ENCODE measurements at regions of chr1 and their contacts with region 1.

Region 1: DNA sequence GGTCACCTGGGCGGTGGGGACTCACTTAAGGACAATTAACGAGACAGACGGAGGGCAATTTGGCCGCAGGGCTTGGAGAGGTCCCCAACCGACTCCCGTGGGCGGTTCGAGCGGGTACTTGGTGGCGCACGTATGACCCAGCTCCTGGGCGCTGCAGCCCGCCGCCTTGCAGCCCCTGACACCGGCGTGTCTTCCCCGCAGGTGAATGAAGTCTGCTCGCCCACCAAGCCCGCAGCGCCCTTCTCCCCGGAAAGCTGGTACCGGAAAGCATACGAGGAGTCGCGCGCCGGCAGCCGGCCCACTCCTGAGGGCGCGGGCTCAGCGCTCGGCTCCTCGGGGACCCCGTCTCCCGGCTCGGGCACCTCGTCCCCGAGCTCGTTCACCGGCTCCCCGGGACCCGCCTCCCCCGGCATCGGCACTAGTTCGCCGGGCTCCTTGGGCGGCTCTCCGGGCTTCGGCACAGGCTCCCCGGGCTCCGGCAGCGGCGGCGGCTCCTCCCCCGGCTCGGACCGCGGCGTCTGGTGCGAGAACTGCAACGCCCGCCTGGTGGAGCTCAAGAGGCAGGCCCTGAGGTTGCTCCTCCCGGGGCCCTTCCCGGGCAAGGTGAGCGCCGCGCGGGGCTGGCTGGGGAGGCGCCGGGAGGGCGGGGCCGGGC is 1.4 kb downstream of the KIF26B start:
- DNase-seq: peak; percentile 28 to 83 (median 58)
- ATAC-seq: peak; percentile 93
- H3K4me3 ChIP-seq: peak overlapping the region; percentile 52
- H3K4me3 Mint-ChIP-seq: peak overlapping the region; percentile 76 to 88 (median 83)
- H3K27ac ChIP-seq: no peak overlapping the region
- H3K27ac Mint-ChIP-seq: peak overlapping the region in 1 of 9 donors; percentile 29
- H3K4me1 ChIP-seq: peaks cover 15 to 20% of the 10 kb centered on the region in 2 donors
- H3K4me1 Mint-ChIP-seq: peaks cover 0 to 28% (median 26%) of the 10 kb centered on the region in 7 donors
- H3K27me3 ChIP-seq: peaks cover 3 to 13% of the 10 kb centered on the region in 2 donors
- H3K27me3 Mint-ChIP-seq: peaks cover 53 to 71% (median 67%) of the 10 kb centered on the region in 5 donors

Region 2: GRCh38 chr1:245197911-245198379 is 41.7 kb after region 1 on chr1:
- CTCF ChIA-PET with region 1: no interaction called
- POLR2A ChIA-PET with region 1: no interaction called
- intact Hi-C with region 1: no loop called
- DNase-seq: no peak
- ATAC-seq: no peak
- H3K4me3 ChIP-seq: no peak overlapping the region
- H3K4me3 Mint-ChIP-seq: no peak overlapping the region
- H3K27ac ChIP-seq: no peak overlapping the region
- H3K27ac Mint-ChIP-seq: no peak overlapping the region
- H3K4me1 ChIP-seq: no peaks in the 10 kb centered on the region
- H3K4me1 Mint-ChIP-seq: peaks cover 0 to 4% (median 0%) of the 10 kb centered on the region in 7 donors
- H3K27me3 ChIP-seq: no peaks in the 10 kb centered on the region
- H3K27me3 Mint-ChIP-seq: peaks cover 3 to 31% (median 30%) of the 10 kb centered on the region in 5 donors

Region 3: GRCh38 chr1:245225322-245226202 is 69.4 kb after region 1 on chr1:
- CTCF ChIA-PET with region 1: no interaction called
- POLR2A ChIA-PET with region 1: no interaction called
- intact Hi-C with region 1: no loop called
- DNase-seq: no peak
- ATAC-seq: no peak
- H3K4me3 ChIP-seq: no peak overlapping the region
- H3K4me3 Mint-ChIP-seq: no peak overlapping the region
- H3K27ac ChIP-seq: no peak overlapping the region
- H3K27ac Mint-ChIP-seq: no peak overlapping the region
- H3K4me1 ChIP-seq: no peaks in the 10 kb centered on the region
- H3K4me1 Mint-ChIP-seq: no peaks in the 10 kb centered on the region
- H3K27me3 ChIP-seq: no peaks in the 10 kb centered on the region
- H3K27me3 Mint-ChIP-seq: peaks cover 0 to 6% (median 0%) of the 10 kb centered on the region in 5 donors

Region 4: GRCh38 chr1:245549996-245550719 is 393.9 kb after region 1 on chr1:
- CTCF ChIA-PET with region 1: no interaction called
- POLR2A ChIA-PET with region 1: no interaction called
- intact Hi-C with region 1: no loop called
- DNase-seq: no peak
- ATAC-seq: no peak
- H3K4me3 ChIP-seq: no peak overlapping the region
- H3K4me3 Mint-ChIP-seq: no peak overlapping the region
- H3K27ac ChIP-seq: no peak overlapping the region
- H3K27ac Mint-ChIP-seq: no peak overlapping the region
- H3K4me1 ChIP-seq: no peaks in the 10 kb centered on the region
- H3K4me1 Mint-ChIP-seq: no peaks in the 10 kb centered on the region
- H3K27me3 ChIP-seq: no peaks in the 10 kb centered on the region
- H3K27me3 Mint-ChIP-seq: peaks cover 0 to 37% (median 14%) of the 10 kb centered on the region in 5 donors

Region 5: DNA sequence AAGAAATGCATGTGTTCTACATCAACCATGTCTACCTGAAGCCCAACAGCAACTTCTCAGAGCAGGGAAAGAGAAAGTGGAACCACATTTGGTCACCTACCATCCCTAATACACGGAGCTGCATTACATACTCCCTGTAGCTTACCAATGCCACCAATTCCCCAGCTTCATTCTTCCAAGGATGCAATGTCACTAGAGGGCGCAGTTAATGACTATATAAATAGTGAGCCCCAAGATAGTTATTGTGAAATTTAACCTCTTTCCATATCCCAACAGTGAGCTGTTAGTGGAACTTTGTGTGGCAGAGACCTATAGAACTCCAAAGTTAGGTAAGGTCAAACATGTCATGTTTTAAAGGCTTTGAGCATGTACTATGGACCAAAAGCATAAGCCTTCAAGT is 732.6 kb after region 1 on chr1:
- CTCF ChIA-PET with region 1: no interaction called
- POLR2A ChIA-PET with region 1: no interaction called
- intact Hi-C with region 1: loop called (anchors 2 to 5 kb)
- DNase-seq: peak in 4 of 9 donors; percentile 13 to 25 (median 18)
- ATAC-seq: peak; percentile 37
- H3K4me3 ChIP-seq: no peak overlapping the region
- H3K4me3 Mint-ChIP-seq: no peak overlapping the region
- H3K27ac ChIP-seq: no peak overlapping the region
- H3K27ac Mint-ChIP-seq: no peak overlapping the region
- H3K4me1 ChIP-seq: no peaks in the 10 kb centered on the region
- H3K4me1 Mint-ChIP-seq: peaks cover 0 to 15% (median 3%) of the 10 kb centered on the region in 7 donors
- H3K27me3 ChIP-seq: no peaks in the 10 kb centered on the region
- H3K27me3 Mint-ChIP-seq: no peaks in the 10 kb centered on the region

Region 6: DNA sequence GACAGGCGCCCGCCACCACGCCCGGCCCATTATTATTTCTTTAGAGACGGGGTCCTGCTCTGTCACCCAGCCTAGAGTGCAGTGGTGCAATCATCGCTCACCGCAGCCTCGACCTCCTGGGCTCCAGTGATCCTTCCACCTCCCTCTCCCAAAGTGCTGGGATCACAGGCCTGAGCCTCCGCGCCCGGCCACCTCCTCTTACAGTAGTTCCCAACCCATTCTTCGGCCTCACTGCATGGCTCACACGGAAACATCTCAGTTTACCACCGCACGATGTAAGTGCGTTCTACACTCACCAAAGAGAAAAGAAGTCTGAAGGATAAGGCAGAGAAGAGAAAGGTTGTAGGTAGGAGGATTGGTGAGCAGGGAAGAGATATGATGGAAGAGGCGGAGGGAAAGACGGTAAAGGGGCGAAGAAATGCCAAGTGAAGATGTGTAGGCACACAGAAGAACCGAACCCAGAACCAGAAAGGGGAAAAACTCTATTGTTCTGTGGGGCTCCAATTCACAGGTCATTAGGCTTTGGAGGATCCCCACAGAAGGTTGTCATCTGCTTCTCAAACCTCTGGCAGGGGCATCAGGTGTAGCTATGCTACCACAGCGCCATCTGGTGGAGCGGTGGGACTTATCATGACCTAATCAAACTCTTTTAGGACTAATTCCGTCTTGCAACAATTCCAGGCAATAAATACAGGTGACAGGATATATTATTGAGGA is 846.7 kb after region 1 on chr1:
- CTCF ChIA-PET with region 1: interaction called, 10 read pairs
- POLR2A ChIA-PET with region 1: no interaction called
- intact Hi-C with region 1: loop called (anchors 1 kb)
- DNase-seq: peak; percentile 55 to 83 (median 71)
- ATAC-seq: peak; percentile 78
- H3K4me3 ChIP-seq: no peak overlapping the region
- H3K4me3 Mint-ChIP-seq: no peak overlapping the region
- H3K27ac ChIP-seq: no peak overlapping the region
- H3K27ac Mint-ChIP-seq: no peak overlapping the region
- H3K4me1 ChIP-seq: no peaks in the 10 kb centered on the region
- H3K4me1 Mint-ChIP-seq: peaks cover 0 to 4% (median 0%) of the 10 kb centered on the region in 7 donors
- H3K27me3 ChIP-seq: no peaks in the 10 kb centered on the region
- H3K27me3 Mint-ChIP-seq: no peaks in the 10 kb centered on the region

Region 7: GRCh38 chr1:246450611-246451251 is 1294.5 kb after region 1 on chr1:
- CTCF ChIA-PET with region 1: interaction called, 3 read pairs
- POLR2A ChIA-PET with region 1: no interaction called
- intact Hi-C with region 1: loop called in 1 of 2 experiments (anchors 2 kb)
- DNase-seq: peak in 1 of 9 donors; percentile 2
- ATAC-seq: no peak
- H3K4me3 ChIP-seq: no peak overlapping the region
- H3K4me3 Mint-ChIP-seq: no peak overlapping the region
- H3K27ac ChIP-seq: no peak overlapping the region
- H3K27ac Mint-ChIP-seq: no peak overlapping the region
- H3K4me1 ChIP-seq: no peaks in the 10 kb centered on the region
- H3K4me1 Mint-ChIP-seq: peaks cover 0 to 16% (median 5%) of the 10 kb centered on the region in 7 donors
- H3K27me3 ChIP-seq: no peaks in the 10 kb centered on the region
- H3K27me3 Mint-ChIP-seq: no peaks in the 10 kb centered on the region

Measured in naive thymus-derived CD4-positive, alpha-beta T cell (primary cell).